Heart left ventricle (tissue), 16 donors: ENCODE measurements at regions of chr12 and their contacts with region 1.

Region 1: DNA sequence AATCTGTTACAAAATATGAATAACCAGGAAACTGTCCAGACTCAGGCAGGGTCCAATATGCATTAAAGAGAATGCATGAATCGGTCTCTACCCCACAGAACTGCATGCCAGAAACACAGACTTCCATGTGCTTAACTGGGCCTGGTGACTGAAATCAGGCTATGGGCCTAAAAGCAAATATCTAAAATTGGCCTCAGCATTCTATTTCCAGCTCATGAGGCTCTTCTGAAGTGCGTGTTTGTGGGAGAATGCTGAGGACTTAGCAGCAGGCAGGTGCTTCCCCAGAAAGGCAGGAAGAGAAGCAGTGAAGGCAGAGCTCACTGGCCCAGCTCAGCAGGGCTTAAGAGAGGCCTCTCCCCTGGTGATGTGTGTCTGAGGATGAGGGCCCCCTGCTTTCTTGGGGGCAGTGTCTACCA is 48.5 kb downstream of the ADGRD1 start:
- DNase-seq: no peak
- ATAC-seq: peak; percentile 35 to 73 (median 50)
- H3K4me3 ChIP-seq: no peak overlapping the region
- H3K27ac ChIP-seq: peak overlapping the region in 10 of 12 donors; percentile 58 to 86 (median 74)
- H3K4me1 ChIP-seq: peaks cover 0 to 35% (median 9%) of the 10 kb centered on the region in 12 donors
- H3K27me3 ChIP-seq: no peaks in the 10 kb centered on the region
- CTCF ChIP-seq: no peak
- POLR2A ChIP-seq: no peak

Region 2: DNA sequence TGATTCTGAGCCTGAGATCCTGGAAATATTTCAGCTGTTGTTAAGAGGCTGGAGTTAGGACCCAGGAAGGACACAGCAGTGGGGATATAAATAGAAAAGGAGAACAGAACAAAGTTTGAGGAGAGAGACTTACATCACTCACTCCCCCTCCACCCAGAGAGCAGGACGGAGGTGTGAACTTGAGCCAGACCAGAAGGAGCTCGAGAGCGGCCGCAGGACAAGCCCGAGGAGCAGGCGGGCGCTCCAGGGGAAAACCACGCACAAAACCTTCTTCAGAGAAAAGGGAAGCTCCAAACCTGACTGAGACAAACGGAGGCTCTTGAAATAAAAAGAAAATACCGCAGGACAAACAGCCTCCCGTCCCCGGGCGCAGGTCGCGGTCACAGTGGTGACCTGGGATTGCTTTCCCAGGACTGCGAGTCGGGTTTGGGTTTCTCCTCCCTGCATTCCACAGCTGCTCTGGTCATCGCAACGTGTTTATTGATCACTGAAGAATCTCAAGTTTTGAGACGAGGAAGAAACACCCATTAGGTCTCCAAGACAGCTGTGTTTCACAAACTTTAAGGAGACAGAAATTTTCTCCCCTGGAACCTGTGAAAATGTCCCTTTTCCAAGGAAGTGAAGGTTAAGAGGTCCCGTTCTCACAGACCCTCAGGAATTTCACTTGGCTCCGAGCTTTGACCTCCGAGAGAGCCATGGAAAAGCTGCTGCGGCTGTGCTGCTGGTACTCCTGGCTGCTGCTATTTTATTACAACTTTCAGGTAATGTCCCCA is 48.3 kb before region 1 on chr12 and contains the start of gene ADGRD1:
- intact Hi-C with region 1: loop called in 3 of 10 experiments (anchors 2 to 5 kb)
- DNase-seq: peak; percentile 73 to 86 (median 77)
- ATAC-seq: peak; percentile 86 to 91 (median 88)
- H3K4me3 ChIP-seq: peak within 1 kb of the TSS; percentile 39 to 81 (median 64)
- H3K27ac ChIP-seq: peak within 1 kb of the TSS; percentile 66 to 89 (median 77)
- H3K4me1 ChIP-seq: peaks cover 0 to 41% (median 17%) of the 10 kb centered on the region in 12 donors
- H3K27me3 ChIP-seq: no peaks in the 10 kb centered on the region
- CTCF ChIP-seq: no peak
- POLR2A ChIP-seq: peak in 1 of 2 donors; percentile 82
- total RNA-seq, gene ADGRD1: 36.3 to 109 (median 75.1) TPM

Region 3: GRCh38 chr12:130961921-130962451 is 40.2 kb before region 1 on chr12:
- intact Hi-C with region 1: loop called in 3 of 10 experiments (anchors 2 to 5 kb)
- DNase-seq: peak; percentile 73 to 94 (median 78)
- ATAC-seq: peak; percentile 90 to 93 (median 92)
- H3K4me3 ChIP-seq: no peak overlapping the region
- H3K27ac ChIP-seq: peak overlapping the region; percentile 14 to 86 (median 64)
- H3K4me1 ChIP-seq: peaks cover 0 to 54% (median 13%) of the 10 kb centered on the region in 12 donors
- H3K27me3 ChIP-seq: no peaks in the 10 kb centered on the region
- CTCF ChIP-seq: peak in 1 of 12 donors; percentile 21
- POLR2A ChIP-seq: no peak